Activated CD8-positive, alpha-beta T cell treated with anti-CD3 and anti-CD28 coated beads, Interleukin-2, amount 10 ng/mL, durations not matched to agents 7 days and 5 days (primary cell): ENCODE measurements at regions of chr5 and their contacts with region 1.

Region 1: GRCh38 chr5:177370488-177371119 is 12.9 kb downstream of the RGS14 start:
- DNase-seq: peak; percentile 63
- ATAC-seq: peak; percentile 62
- H3K4me3 Mint-ChIP-seq: peak overlapping the region; percentile 31
- H3K27ac Mint-ChIP-seq: no peak overlapping the region
- H3K4me1 Mint-ChIP-seq: peaks cover 70% of the 10 kb centered on the region
- H3K27me3 Mint-ChIP-seq: no peaks in the 10 kb centered on the region

Region 2: GRCh38 chr5:177351385-177352329 is 18.9 kb before region 1 on chr5 and contains the start of gene LMAN2:
- CTCF ChIA-PET with region 1: interaction called, 70 read pairs
- POLR2A ChIA-PET with region 1: interaction called, 18 read pairs
- DNase-seq: peak; percentile 96
- ATAC-seq: peak; percentile 99
- H3K4me3 Mint-ChIP-seq: peak within 1 kb of the TSS; percentile 97
- H3K27ac Mint-ChIP-seq: peak within 1 kb of the TSS; percentile 100
- H3K4me1 Mint-ChIP-seq: peaks cover 66% of the 10 kb centered on the region
- H3K27me3 Mint-ChIP-seq: no peaks in the 10 kb centered on the region
- total RNA-seq, gene LMAN2: 119 to 127 TPM

Region 3: GRCh38 chr5:177382423-177383029 is 11.9 kb after region 1 on chr5:
- CTCF ChIA-PET with region 1: interaction called, 122 read pairs
- POLR2A ChIA-PET with region 1: interaction called, 6 read pairs
- DNase-seq: peak; percentile 44
- ATAC-seq: peak; percentile 33
- H3K4me3 Mint-ChIP-seq: no peak overlapping the region
- H3K27ac Mint-ChIP-seq: peak overlapping the region; percentile 41
- H3K4me1 Mint-ChIP-seq: peaks cover 56% of the 10 kb centered on the region
- H3K27me3 Mint-ChIP-seq: peaks cover 3% of the 10 kb centered on the region